CD8-positive, alpha-beta memory T cell (primary cell): ENCODE measurements at regions of chr17 and their contacts with region 1.

Region 1: DNA sequence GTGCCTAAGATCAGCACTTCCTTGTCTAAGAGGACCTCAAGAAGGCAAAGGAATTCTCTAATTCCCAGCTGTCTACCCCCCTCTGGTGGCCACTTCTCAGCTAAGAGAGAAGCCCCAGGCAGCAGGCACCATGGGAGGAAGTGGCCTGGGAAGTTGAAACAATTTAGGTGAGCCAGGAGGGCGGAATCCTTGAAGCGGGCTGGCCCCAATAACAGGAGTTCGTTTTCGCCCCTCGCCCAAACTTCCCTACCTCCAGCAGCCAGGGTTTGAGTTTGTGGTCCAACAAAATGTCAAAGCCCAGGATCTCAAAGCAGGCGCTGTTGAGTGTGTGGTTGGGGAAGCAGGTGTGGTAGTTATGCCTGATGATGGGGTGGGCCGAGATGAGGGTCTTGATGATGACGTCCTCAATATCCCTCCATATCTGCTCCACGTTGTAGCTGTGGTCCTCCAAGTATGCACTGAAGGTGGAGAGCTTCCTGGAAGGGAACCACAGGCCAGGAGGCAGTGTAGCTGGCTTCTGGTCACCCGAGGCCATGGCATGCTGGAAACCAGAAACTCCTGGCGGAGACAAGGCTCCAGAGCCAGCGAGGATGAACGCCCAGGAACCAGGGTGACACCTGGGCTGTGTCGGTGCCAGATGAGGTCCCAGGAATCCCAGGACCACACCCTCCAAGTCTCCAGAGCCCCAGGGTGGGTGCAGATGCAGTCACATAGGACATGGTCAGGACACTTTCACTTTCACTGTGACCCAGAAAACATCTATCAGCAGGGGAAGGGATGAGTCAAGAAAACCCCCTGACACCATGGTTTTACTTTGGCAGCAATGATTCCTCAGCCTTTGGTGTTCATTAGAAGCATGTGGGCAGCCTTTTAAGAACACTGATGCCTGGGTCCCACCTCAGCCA is 25.6 kb downstream of the TTLL6 start:
- DNase-seq: peak in 1 of 5 donors; percentile 17
- H3K4me3 ChIP-seq: no peak overlapping the region
- H3K4me3 Mint-ChIP-seq: no peak overlapping the region
- H3K27ac ChIP-seq: no peak overlapping the region
- H3K27ac Mint-ChIP-seq: no peak overlapping the region
- H3K4me1 ChIP-seq: no peaks in the 10 kb centered on the region
- H3K4me1 Mint-ChIP-seq: peaks cover 0 to 7% (median 0%) of the 10 kb centered on the region in 3 donors
- H3K27me3 ChIP-seq: peaks cover 3% of the 10 kb centered on the region
- H3K27me3 Mint-ChIP-seq: peaks cover 22 to 61% of the 10 kb centered on the region in 2 donors

Region 2: DNA sequence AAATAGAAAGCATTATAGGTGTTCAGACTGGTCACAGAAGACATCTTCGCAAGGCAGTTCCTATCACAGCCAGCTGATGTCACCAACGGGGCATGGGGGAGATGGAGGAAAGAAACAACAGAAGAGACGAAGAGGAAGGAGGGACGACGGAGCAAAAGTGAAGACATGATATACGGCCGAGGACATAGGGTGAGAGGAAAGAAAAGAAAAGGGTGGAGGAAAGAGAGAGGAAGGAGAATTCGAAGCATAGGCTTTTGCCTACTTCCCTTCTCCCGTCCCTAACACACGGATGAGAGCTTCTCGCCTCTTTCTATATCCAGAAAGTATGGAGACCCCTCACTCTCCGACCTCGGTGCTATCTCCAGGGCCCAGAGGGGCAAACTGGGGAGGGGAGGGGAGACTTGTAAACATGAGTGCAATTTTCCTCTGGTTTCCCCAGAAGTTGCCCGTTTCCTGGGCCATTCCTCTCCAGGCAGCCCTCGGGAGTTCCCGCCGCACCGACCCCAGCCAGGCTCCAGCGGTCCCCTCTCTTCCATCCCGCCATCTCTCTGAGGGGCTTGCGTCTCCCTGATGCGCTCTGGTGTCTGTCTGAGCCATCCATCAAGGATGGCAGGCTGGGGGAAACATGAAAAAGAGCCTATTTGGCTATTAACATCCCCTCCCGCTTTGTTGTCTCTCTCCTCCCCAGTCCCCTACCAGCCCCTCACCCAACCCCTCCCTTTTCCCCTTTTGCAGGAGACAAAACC is 779.8 kb before region 1 on chr17:
- CTCF ChIA-PET with region 1: no interaction called
- POLR2A ChIA-PET with region 1: no interaction called
- DNase-seq: peak in 3 of 5 donors; percentile 9 to 63 (median 32)
- H3K4me3 ChIP-seq: peak overlapping the region; percentile 29
- H3K4me3 Mint-ChIP-seq: peak overlapping the region; percentile 27 to 82 (median 77)
- H3K27ac ChIP-seq: no peak overlapping the region
- H3K27ac Mint-ChIP-seq: peak overlapping the region in 6 of 8 donors; percentile 1 to 32 (median 6)
- H3K4me1 ChIP-seq: peaks cover 12% of the 10 kb centered on the region
- H3K4me1 Mint-ChIP-seq: peaks cover 8 to 21% (median 11%) of the 10 kb centered on the region in 3 donors
- H3K27me3 ChIP-seq: peaks cover 22% of the 10 kb centered on the region
- H3K27me3 Mint-ChIP-seq: peaks cover 41 to 58% of the 10 kb centered on the region in 2 donors

Region 3: DNA sequence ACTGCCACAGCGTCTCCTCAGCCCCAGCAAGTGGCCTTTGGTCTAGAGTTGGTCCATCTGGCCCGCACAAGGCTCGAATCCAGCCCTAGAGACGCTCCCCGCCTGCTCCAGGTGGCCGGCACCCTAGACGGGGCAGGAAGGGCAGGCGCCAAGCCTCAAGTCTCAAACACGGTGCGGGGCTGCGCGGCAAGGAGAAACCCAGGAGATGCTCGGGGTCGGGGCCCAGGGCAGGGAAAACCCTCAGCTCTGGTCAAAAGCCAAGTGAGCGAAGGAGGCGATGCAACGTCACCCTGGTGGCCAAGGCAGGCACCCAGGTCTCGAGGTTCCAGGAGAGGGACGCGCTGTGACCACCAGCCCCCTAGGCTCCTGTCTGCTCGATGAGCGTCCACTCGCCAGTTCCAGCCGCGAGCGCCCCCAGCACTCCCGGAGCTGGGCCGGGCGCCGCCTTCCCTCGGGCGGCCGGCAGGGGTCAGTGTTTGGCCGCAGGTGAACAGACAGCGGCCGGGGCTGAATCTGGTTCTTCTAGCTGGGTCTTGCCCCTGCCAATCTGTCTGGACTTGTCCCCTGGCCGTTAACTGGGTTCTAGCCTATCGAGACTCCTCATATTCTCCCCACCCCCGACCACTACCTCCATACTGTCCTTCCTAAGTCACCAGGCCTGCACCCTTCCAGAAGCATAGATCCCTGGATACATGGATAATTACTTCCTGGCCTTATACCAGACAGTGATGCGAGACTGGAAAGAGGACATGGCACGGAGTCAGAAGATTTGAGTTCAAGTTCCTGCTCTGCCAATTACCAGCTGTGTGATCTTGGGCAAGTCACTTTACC is 113.0 kb before region 1 on chr17:
- CTCF ChIA-PET with region 1: interaction called, 26 read pairs
- POLR2A ChIA-PET with region 1: no interaction called
- DNase-seq: peak; percentile 55 to 70 (median 63)
- H3K4me3 ChIP-seq: no peak overlapping the region
- H3K4me3 Mint-ChIP-seq: peak overlapping the region in 4 of 7 donors; percentile 20 to 56 (median 46)
- H3K27ac ChIP-seq: no peak overlapping the region
- H3K27ac Mint-ChIP-seq: peak overlapping the region in 1 of 8 donors; percentile 10
- H3K4me1 ChIP-seq: peaks cover 3% of the 10 kb centered on the region
- H3K4me1 Mint-ChIP-seq: peaks cover 0 to 7% (median 0%) of the 10 kb centered on the region in 3 donors
- H3K27me3 ChIP-seq: peaks cover 9% of the 10 kb centered on the region
- H3K27me3 Mint-ChIP-seq: peaks cover 30 to 45% of the 10 kb centered on the region in 2 donors